ENCODE measurements at regions of chr1 and their contacts with region 1.

Region 1: DNA sequence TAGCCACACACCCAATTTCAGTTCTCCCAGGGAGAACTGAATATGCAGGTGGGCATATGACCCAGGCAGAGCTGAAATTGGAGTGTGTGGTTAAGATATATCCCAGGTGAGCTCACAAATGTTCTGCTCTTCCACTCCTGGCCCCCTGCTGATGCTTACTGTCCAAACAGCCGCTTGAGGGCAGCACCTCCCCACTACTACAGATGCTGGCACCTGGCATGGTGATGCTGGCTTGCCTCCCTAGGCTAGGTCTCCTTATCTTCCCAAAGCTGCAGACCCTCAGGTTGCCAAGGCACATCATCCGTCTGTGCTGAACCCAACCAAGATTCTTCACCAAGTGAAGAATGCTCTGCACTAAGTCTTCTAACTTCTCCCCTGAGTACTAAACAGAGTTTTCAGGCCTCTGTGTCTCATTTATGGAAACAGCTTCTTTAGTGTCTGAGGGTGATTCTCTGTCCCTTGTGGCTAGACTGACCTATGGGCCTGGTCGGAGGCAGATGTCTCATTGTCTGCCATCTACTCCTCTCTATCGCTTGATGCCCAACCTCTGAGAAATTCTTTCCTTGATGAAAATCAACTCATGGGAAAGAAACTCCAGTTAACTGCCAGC is 27.2 kb downstream of the XCL1 start:
- DNase-seq: peak; percentile 83
- ATAC-seq: peak; percentile 98
- H3K4me3 ChIP-seq: no peak overlapping the region
- H3K27ac ChIP-seq: no peak overlapping the region
- H3K4me1 ChIP-seq: no peaks in the 10 kb centered on the region
- H3K27me3 ChIP-seq: no peaks in the 10 kb centered on the region
- CTCF ChIP-seq: peak; percentile 87

Region 2: GRCh38 chr1:168439456-168440375 is 163.9 kb before region 1 on chr1:
- intact Hi-C with region 1: no loop called
- DNase-seq: peak; percentile 66
- ATAC-seq: peak; percentile 90
- H3K4me3 ChIP-seq: peak overlapping the region; percentile 19
- H3K27ac ChIP-seq: peak overlapping the region; percentile 47
- H3K4me1 ChIP-seq: peaks cover 3% of the 10 kb centered on the region
- H3K27me3 ChIP-seq: no peaks in the 10 kb centered on the region
- CTCF ChIP-seq: peak; percentile 77

Region 3: GRCh38 chr1:169348383-169349036 is 744.9 kb after region 1 on chr1:
- intact Hi-C with region 1: loop called (anchors 5 kb)
- DNase-seq: no peak
- ATAC-seq: peak; percentile 73
- H3K4me3 ChIP-seq: no peak overlapping the region
- H3K27ac ChIP-seq: no peak overlapping the region
- H3K4me1 ChIP-seq: no peaks in the 10 kb centered on the region
- H3K27me3 ChIP-seq: no peaks in the 10 kb centered on the region
- CTCF ChIP-seq: peak; percentile 86

Measured in upper lobe of right lung (tissue), 1 donor.